ENCODE measurements at regions of chr5 and their contacts with region 1.

Region 1: DNA sequence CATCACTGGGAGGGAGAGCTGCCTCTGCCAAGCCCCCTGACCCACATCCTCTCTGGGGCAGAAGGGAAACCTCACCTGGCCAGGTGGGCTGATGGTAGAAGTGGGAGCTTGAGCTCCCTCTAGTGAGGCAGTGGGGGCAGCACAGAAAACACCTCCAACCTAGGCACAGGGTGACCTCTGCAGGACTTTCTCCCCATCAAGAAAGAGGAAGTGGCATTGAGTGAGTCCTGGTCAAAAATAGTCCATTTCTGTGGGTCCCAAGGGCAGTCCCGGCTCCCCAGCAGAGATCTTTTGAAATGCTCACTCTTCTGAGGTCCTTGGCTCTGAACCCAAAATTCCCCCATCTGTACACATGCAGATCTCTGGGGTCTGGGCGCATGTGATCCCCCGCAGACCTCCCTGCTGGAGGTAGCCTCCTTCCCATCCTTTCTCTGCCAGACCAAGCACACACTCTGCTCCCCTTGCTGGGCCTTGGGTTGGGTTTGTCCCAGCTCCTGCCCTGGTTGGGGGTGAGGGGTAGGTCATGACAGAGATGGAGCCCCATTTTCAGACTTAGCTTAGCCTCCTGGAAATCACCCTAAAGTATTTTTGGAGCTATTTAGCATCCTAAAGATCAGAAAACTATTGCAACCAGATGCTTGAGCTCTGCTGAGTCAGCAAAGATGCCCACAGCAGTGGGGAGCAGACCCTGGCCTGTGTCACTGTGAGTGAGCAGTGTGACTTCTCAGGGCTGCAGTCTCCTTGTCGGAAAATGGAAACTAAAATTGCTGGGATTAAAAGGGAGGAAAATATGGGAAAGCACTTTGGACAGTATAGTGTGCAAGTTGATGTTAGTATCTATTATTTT is 41.6 kb upstream of the LCP2 start:
- DNase-seq: peak; percentile 28 to 86 (median 55)
- ATAC-seq: peak; percentile 78 to 86 (median 81)
- H3K4me3 ChIP-seq: no peak overlapping the region
- H3K4me3 Mint-ChIP-seq: no peak overlapping the region
- H3K27ac ChIP-seq: peak overlapping the region; percentile 11
- H3K27ac Mint-ChIP-seq: peak overlapping the region; percentile 70 to 87
- H3K4me1 ChIP-seq: peaks cover 39 to 50% of the 10 kb centered on the region in 2 experiments
- H3K4me1 Mint-ChIP-seq: peaks cover 37 to 41% (median 38%) of the 10 kb centered on the region in 3 donors
- H3K27me3 ChIP-seq: no peaks in the 10 kb centered on the region
- H3K27me3 Mint-ChIP-seq: no peaks in the 10 kb centered on the region

Region 2: DNA sequence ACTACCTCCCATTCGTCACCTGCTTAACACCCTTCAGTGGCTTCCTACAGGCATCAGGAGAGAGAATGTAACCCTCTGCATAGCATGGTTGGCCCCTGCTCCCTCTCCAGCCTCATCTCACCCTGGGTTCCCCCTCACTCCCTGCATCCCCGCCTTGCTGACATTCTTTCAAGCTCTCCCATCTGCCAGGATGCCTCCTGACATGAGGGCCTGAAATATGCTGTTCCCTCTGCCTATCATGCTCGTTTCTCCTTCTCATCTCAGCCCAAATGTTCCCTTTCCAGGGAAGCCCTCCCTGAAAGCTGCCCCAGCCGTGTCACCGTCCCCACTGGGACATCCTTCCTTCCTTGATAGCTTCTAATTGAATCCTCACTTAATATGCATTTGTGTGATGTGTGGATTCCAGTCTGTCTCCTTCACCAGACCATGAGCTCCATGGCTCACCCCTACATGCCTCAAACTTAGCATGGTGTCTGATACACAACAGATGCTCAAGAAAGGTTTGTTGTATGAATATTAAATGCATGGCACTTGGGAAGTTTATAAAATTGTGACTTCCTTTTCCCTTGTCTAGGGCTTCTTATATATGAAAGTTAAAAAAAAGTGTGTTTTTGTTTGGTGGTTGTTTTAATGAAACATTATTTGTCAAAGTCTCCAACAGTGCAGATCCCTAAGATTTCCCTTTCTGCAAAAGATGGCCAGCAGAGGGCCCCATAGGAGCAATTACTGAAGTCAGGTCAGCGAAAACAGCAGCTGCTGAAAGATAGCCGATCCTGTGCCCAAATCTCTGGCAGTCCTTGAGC is 113.6 kb before region 1 on chr5:
- CTCF ChIA-PET with region 1: interaction called, 15 to 42 read pairs
- POLR2A ChIA-PET with region 1: no interaction called
- DNase-seq: peak; percentile 37 to 85 (median 71)
- ATAC-seq: peak; percentile 54 to 82 (median 67)
- H3K4me3 ChIP-seq: no peak overlapping the region
- H3K4me3 Mint-ChIP-seq: no peak overlapping the region
- H3K27ac ChIP-seq: no peak overlapping the region
- H3K27ac Mint-ChIP-seq: no peak overlapping the region
- H3K4me1 ChIP-seq: peaks cover 0 to 5% of the 10 kb centered on the region in 2 experiments
- H3K4me1 Mint-ChIP-seq: peaks cover 4 to 13% (median 4%) of the 10 kb centered on the region in 3 donors
- H3K27me3 ChIP-seq: no peaks in the 10 kb centered on the region
- H3K27me3 Mint-ChIP-seq: no peaks in the 10 kb centered on the region

Region 3: DNA sequence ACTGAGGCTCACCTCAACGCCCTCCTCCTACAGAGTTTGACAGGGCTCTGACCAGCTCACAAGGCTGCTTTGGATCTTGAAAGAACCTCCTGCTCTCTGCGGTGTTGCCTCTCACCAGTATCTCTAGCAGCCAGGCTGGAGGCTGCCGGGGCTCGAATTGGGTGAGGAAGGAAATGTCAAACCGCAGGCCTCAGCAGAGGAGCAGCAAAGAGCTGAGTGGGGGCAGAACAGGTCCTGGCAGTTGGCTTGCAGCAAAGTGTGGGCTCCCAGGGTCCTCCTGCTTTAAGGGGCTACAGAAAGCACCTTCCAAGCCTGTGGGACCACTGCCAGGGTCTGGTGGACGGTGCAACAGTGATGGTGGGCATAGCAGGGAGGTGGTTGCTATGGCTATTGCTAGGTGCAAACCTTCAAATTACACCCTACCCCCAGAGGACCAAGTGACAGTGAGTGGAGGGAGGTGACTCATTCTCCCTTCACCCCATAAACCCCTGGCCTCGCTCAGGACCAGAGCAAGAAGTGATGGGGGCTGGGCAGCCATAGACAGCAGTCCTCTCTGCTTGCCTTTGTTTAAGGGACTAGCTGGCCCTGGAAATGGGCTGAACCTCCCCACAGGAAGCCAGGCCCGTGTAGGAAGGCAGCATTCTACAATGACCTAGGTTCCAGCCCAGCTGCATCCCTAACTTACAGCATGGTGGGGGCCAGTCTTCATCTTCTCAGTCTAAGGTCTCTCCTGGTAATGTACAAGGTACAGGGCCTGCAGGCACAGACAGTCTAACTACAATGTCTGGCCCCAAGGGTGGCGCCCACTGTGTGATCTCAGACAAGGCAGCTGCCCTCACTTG is 60.3 kb before region 1 on chr5:
- CTCF ChIA-PET with region 1: interaction called, 11 to 34 read pairs
- POLR2A ChIA-PET with region 1: interaction called, 3 to 4 read pairs
- DNase-seq: peak; percentile 80 to 95 (median 88)
- ATAC-seq: peak; percentile 78 to 80 (median 79)
- H3K4me3 ChIP-seq: peak overlapping the region; percentile 35 to 49
- H3K4me3 Mint-ChIP-seq: peak overlapping the region; percentile 68 to 99 (median 75)
- H3K27ac ChIP-seq: peak overlapping the region; percentile 73
- H3K27ac Mint-ChIP-seq: peak overlapping the region; percentile 86 to 99
- H3K4me1 ChIP-seq: peaks cover 79 to 97% of the 10 kb centered on the region in 2 experiments
- H3K4me1 Mint-ChIP-seq: peaks cover 97 to 100% (median 97%) of the 10 kb centered on the region in 3 donors
- H3K27me3 ChIP-seq: no peaks in the 10 kb centered on the region
- H3K27me3 Mint-ChIP-seq: no peaks in the 10 kb centered on the region

Region 4: GRCh38 chr5:170293273-170293672 is 45.9 kb before region 1 on chr5:
- CTCF ChIA-PET with region 1: interaction called, 9 to 26 read pairs
- POLR2A ChIA-PET with region 1: interaction called, 4 to 7 read pairs
- DNase-seq: peak in 28 of 35 experiments; percentile 29 to 74 (median 46)
- ATAC-seq: peak; percentile 16 to 40 (median 28)
- H3K4me3 ChIP-seq: peak overlapping the region; percentile 20 to 94
- H3K4me3 Mint-ChIP-seq: peak overlapping the region; percentile 99
- H3K27ac ChIP-seq: peak overlapping the region; percentile 88
- H3K27ac Mint-ChIP-seq: peak overlapping the region; percentile 99
- H3K4me1 ChIP-seq: peaks cover 58 to 66% of the 10 kb centered on the region in 2 experiments
- H3K4me1 Mint-ChIP-seq: peaks cover 75 to 94% (median 76%) of the 10 kb centered on the region in 3 donors
- H3K27me3 ChIP-seq: no peaks in the 10 kb centered on the region
- H3K27me3 Mint-ChIP-seq: no peaks in the 10 kb centered on the region

Region 5: DNA sequence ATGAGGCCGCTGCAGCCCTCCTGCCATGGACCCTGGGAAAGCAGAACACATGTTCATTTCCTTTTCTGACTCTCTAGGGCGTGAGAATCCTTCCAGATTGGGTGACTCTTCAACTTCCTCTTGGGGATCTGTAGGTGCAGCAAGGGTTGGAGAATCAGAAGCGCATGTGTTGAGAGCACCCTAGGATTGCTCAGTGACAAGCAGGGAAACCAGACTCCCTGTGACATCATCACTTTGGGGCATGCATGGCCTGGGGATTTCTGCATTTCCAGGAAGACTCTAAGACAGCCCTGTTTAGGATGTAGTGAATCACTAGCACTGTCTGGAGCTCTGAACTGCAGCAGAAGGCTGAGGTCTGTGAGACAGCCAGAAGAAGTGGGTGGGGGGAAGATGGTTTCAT is 26.5 kb before region 1 on chr5:
- CTCF ChIA-PET with region 1: interaction called in 1 of 2 experiments, 14 read pairs
- POLR2A ChIA-PET with region 1: interaction called in 1 of 2 experiments, 4 read pairs
- DNase-seq: peak in 17 of 35 experiments; percentile 16 to 79 (median 39)
- ATAC-seq: peak; percentile 67 to 85 (median 78)
- H3K4me3 ChIP-seq: no peak overlapping the region
- H3K4me3 Mint-ChIP-seq: peak overlapping the region; percentile 55 to 81 (median 64)
- H3K27ac ChIP-seq: peak overlapping the region; percentile 74
- H3K27ac Mint-ChIP-seq: peak overlapping the region; percentile 94 to 97
- H3K4me1 ChIP-seq: peaks cover 37 to 48% of the 10 kb centered on the region in 2 experiments
- H3K4me1 Mint-ChIP-seq: peaks cover 56 to 69% (median 69%) of the 10 kb centered on the region in 3 donors
- H3K27me3 ChIP-seq: no peaks in the 10 kb centered on the region
- H3K27me3 Mint-ChIP-seq: no peaks in the 10 kb centered on the region

Region 6: DNA sequence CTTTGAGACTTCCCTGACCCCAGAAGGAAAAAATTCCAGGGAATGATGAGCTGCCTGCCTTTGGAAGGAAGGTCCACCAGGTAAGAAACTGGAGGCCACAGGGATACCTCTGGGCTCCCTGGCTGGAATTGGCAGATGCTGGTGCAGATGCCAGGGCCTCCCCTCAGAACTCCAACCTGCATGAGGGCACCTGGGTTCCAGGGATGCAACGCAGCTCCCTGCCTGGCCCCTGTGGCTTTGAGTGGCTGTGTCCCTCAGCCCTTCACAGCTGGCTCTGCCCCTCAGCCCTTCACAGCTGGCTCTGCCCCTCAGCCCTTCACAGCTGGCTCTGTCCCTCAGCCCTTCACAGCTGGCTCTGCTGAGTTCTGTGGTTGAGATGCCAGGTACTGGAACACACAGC is 36.1 kb after region 1 on chr5:
- CTCF ChIA-PET with region 1: no interaction called
- POLR2A ChIA-PET with region 1: no interaction called
- DNase-seq: no peak
- ATAC-seq: no peak
- H3K4me3 ChIP-seq: no peak overlapping the region
- H3K4me3 Mint-ChIP-seq: no peak overlapping the region
- H3K27ac ChIP-seq: no peak overlapping the region
- H3K27ac Mint-ChIP-seq: no peak overlapping the region
- H3K4me1 ChIP-seq: no peaks in the 10 kb centered on the region
- H3K4me1 Mint-ChIP-seq: no peaks in the 10 kb centered on the region
- H3K27me3 ChIP-seq: peaks cover 0 to 11% of the 10 kb centered on the region in 2 experiments
- H3K27me3 Mint-ChIP-seq: peaks cover 2 to 6% of the 10 kb centered on the region in 2 donors